A549 (cell line): ENCODE measurements at regions of chr10 and their contacts with region 1.

Region 1: GRCh38 chr10:86971232-86971991 is 3.1 kb downstream of the ADIRF start:
- DNase-seq: peak; percentile 79 to 85
- ATAC-seq: peak; percentile 68 to 79
- H3K4me3 ChIP-seq: peak overlapping the region; percentile 59
- H3K27ac ChIP-seq: peak overlapping the region; percentile 87 to 96
- H3K4me1 ChIP-seq: peaks cover 40% of the 10 kb centered on the region
- CTCF ChIP-seq: no peak
- EP300 ChIP-seq: no peak
- POLR2A ChIP-seq: no peak
- RAD21 ChIP-seq: no peak; a peak in 1 of 5 replicates

Region 2: GRCh38 chr10:86857128-86857721 is 114.2 kb before region 1 on chr10:
- CTCF ChIA-PET with region 1: no interaction called
- POLR2A ChIA-PET with region 1: no interaction called
- DNase-seq: no peak
- ATAC-seq: peak in 1 of 2 experiments; percentile 46; a peak in 2 of 6 replicates
- H3K4me3 ChIP-seq: no peak overlapping the region
- H3K27ac ChIP-seq: no peak overlapping the region
- H3K4me1 ChIP-seq: peaks cover 7% of the 10 kb centered on the region; the same call in 2 of the 3 replicates
- CTCF ChIP-seq: no peak
- EP300 ChIP-seq: no peak
- POLR2A ChIP-seq: no peak
- RAD21 ChIP-seq: no peak

Region 3: DNA sequence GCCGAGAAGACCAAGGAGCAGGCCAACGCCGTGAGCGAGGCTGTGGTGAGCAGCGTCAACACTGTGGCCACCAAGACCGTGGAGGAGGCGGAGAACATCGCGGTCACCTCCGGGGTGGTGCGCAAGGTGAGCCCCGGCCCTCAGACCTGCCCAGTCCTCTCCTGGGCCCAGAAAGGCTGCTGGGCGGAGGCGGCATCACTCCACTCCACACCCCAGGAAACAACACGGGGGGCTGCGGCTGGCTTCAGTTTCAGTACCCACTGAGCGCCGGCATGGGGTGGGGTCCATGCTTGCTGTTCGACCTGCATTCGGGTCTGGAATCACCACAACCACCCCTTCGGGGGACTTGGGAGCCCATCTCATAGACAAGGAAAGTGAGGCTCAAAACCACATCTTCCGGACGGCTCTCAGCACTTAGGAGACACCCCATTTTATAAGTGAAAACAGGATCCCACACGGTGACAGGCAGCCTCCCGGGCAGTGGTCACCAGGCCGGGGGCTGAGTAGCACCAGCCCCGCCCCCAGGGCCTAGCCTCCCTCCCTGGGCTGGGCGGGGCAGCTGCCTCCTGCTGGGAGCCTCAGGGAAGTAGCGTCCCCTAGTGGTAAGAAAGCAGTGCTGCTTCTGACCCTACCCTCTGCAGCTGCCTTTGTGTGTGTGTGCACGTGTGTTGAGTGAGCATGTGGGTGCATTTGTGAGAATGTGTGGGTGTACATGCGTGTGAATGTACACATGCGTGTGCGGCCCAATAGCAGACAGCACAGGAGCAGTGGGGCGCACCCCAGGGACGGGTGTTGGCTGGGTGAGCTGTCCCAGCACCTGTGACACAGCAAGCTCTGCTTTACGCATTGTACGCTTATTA is 11.2 kb before region 1 on chr10:
- CTCF ChIA-PET with region 1: interaction called, 23 read pairs
- POLR2A ChIA-PET with region 1: interaction called, 5 read pairs
- DNase-seq: peak in 1 of 2 experiments; percentile 84
- ATAC-seq: peak; percentile 36 to 82
- H3K4me3 ChIP-seq: no peak overlapping the region
- H3K27ac ChIP-seq: peak overlapping the region; percentile 68 to 89
- H3K4me1 ChIP-seq: peaks cover 39% of the 10 kb centered on the region
- CTCF ChIP-seq: peak; percentile 82
- EP300 ChIP-seq: no peak
- POLR2A ChIP-seq: no peak
- RAD21 ChIP-seq: peak; percentile 64 to 82

Region 4: DNA sequence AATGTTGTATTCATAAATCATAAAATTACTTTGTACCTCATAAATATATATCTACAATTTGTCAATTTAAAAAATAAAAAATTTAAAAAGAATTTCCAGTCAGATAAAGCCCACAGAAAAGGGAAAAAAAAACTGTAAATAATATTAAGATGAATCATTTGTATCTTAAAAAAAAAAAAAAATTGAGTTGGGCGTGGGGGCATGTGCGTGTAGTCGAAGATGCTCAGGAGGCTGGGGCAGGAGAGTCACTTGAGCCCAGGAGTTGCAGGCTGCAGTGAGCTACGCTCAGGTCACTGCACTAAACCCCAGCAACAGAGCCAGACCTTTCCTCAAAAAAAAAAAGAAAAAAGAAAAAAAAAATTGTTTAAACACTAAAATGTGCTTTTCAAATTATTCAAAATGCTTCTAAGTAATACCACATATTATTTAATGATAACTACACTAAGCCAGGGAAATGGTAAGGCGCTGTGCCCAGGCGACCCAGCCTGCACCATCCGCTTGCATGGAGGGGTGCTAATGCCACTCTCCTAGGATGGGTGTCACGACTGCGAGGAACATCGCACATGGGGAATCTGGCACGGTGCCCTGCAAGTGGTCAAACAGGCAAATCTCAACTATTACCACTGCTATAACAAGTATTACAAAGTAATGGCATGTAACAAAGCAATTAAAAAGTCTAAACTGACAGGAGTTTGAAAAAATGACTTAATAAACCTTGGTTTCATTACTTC is 107.9 kb after region 1 on chr10:
- CTCF ChIA-PET with region 1: no interaction called
- POLR2A ChIA-PET with region 1: no interaction called
- DNase-seq: no peak
- ATAC-seq: peak in 1 of 2 experiments; percentile 33; a peak in 1 of 6 replicates
- H3K4me3 ChIP-seq: no peak overlapping the region
- H3K27ac ChIP-seq: no peak overlapping the region
- H3K4me1 ChIP-seq: peaks cover 26% of the 10 kb centered on the region
- CTCF ChIP-seq: no peak
- EP300 ChIP-seq: no peak
- POLR2A ChIP-seq: no peak
- RAD21 ChIP-seq: no peak